ENCODE measurements at regions of chr17 and their contacts with region 1.

Region 1: GRCh38 chr17:41894791-41895331 is 23.9 kb downstream of the ACLY start:
- DNase-seq: no peak
- ATAC-seq: no peak
- H3K4me3 ChIP-seq: no peak overlapping the region
- H3K27ac ChIP-seq: no peak overlapping the region
- H3K4me1 ChIP-seq: no peaks in the 10 kb centered on the region
- H3K27me3 ChIP-seq: no peaks in the 10 kb centered on the region
- CTCF ChIP-seq: no peak
- EP300 ChIP-seq: no peak
- POLR2A ChIP-seq: no peak
- RAD21 ChIP-seq: no peak

Region 2: DNA sequence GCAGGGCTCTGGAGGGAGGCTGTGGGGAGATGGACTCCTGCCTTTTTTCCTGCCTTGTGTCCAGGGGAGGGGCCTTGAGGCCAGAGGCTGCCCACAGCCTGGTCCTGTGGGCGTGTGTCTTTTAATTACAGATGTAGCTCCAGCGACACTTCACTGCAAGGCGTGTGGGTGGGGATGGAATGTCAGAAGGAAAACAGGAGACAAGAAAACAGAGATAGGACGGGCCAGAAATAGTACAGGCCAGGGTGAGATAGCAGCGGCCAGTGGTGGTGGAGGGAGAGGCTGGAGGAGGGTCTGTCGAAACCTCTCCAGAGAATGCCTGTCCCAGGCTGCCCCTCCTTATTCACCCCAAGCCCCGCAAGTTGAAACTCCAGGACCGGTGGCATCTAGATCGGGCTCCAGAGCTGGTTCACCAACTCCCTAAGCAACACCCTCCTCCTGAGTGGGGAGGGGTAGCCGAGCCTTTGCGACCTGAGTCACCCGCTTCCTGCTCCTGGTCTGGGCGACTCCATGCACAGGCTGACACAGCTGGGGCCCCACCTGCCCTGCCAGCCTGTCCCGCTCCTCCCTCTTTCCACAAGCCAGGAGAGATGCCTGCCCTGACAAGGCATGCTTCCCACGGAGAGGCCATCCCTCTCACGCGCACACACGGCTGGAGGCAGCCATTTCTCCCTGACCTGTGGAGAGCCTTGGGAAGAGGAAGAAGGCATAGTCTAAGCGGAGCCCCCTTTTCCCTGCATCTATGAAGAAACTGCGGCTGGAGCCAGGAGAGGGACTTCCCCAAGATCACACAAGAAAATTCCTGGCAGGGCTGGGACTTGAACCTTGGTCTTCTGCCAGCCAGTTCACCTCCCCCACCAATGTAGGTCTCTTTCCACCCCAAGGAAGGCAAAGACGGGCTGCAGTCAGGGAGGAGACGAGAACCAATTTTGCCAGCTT is 101.7 kb before region 1 on chr17:
- CTCF ChIA-PET with region 1: no interaction called
- POLR2A ChIA-PET with region 1: no interaction called
- in situ Hi-C with region 1: no loop called
- intact Hi-C with region 1: no loop called
- DNase-seq: peak; percentile 77 to 96 (median 83)
- ATAC-seq: peak; percentile 84
- H3K4me3 ChIP-seq: peak overlapping the region; percentile 23
- H3K27ac ChIP-seq: peak overlapping the region; percentile 90
- H3K4me1 ChIP-seq: peaks cover 44 to 52% of the 10 kb centered on the region in 2 experiments
- H3K27me3 ChIP-seq: no peaks in the 10 kb centered on the region
- CTCF ChIP-seq: no peak
- EP300 ChIP-seq: peak; percentile 66; the same call in 1 of the 2 replicates
- POLR2A ChIP-seq: peak; percentile 72
- RAD21 ChIP-seq: no peak

Region 3: DNA sequence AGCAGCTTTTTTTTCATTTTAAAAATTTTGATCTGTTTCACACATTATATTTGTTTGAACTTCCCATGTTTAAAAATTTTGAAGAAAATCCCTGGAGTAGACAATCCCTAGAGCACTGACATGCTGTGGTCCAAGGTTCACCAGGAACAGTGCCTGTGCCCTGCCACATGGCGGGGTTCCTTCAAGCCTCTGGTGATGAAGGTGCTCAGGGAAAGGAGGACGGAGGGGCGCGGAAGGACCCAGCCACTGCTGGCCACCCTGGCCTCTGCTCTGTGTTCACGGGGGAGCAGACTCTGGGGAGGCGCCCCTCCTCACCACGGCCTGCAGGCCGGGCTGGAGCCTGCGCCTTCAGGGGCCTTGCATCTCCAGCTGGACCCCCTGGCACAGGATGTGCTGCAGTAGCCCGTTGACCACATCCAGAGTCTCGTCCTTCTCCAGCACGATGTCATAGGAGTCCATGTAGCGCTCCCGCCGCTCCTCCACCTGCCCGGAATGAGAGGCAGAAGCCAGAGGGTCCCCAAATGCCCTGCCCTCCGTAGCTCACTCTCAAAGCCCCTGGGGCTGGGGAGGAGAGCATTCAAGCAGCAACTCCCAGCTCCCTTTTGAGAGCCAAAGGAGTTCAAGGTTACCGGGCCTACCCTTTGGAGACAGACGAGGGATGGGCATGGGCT is 69.6 kb before region 1 on chr17:
- CTCF ChIA-PET with region 1: no interaction called
- POLR2A ChIA-PET with region 1: no interaction called
- in situ Hi-C with region 1: no loop called
- intact Hi-C with region 1: no loop called
- DNase-seq: no peak
- ATAC-seq: no peak
- H3K4me3 ChIP-seq: no peak overlapping the region
- H3K27ac ChIP-seq: no peak overlapping the region
- H3K4me1 ChIP-seq: peaks cover 0 to 16% of the 10 kb centered on the region in 2 experiments; a peak in 2 of 5 replicates
- H3K27me3 ChIP-seq: no peaks in the 10 kb centered on the region
- CTCF ChIP-seq: no peak
- EP300 ChIP-seq: no peak
- POLR2A ChIP-seq: no peak
- RAD21 ChIP-seq: no peak

Region 4: DNA sequence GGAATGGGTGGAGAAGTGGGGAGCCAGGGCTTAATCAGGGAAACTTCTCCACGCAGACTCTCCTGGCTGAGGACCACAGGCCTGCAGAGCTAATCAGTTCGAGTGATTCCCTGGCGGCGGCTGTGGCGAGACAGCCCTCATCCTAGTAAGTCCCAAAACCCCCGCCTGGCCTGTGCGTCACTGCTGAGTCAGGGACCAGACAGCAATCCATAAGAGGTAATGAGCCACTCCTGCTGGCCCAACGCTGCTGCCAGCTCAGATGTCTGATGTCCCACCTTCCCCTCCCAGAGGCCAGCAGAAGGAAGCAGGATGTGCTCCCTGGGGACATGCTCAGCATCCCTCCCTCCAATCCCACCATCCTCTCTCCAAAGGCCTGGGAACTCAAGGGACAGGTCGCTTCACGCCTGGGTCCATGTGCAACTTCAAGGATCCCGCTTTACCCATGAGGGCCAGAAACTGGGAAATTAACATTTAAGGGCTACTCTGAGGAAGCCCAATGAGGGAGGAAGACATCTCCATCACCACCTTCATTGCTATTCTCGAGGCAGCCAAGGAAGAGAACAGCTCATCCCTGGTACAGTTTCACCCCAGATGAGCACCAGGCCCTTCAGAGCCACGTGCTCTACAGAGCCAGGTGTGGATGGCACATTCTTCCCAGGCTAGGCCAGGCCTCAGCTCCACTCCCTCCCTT is 16.0 kb after region 1 on chr17:
- CTCF ChIA-PET with region 1: no interaction called
- POLR2A ChIA-PET with region 1: interaction called, 11 read pairs
- in situ Hi-C with region 1: no loop called
- intact Hi-C with region 1: no loop called
- DNase-seq: no peak
- ATAC-seq: no peak
- H3K4me3 ChIP-seq: no peak overlapping the region
- H3K27ac ChIP-seq: no peak overlapping the region
- H3K4me1 ChIP-seq: peaks cover 6 to 21% of the 10 kb centered on the region in 2 experiments; a peak in 4 of 5 replicates
- H3K27me3 ChIP-seq: no peaks in the 10 kb centered on the region
- CTCF ChIP-seq: no peak
- EP300 ChIP-seq: no peak
- POLR2A ChIP-seq: no peak
- RAD21 ChIP-seq: no peak

Measured in K562 (cell line).